ENCODE measurements at regions of chr3 and their contacts with region 1.

Region 1: DNA sequence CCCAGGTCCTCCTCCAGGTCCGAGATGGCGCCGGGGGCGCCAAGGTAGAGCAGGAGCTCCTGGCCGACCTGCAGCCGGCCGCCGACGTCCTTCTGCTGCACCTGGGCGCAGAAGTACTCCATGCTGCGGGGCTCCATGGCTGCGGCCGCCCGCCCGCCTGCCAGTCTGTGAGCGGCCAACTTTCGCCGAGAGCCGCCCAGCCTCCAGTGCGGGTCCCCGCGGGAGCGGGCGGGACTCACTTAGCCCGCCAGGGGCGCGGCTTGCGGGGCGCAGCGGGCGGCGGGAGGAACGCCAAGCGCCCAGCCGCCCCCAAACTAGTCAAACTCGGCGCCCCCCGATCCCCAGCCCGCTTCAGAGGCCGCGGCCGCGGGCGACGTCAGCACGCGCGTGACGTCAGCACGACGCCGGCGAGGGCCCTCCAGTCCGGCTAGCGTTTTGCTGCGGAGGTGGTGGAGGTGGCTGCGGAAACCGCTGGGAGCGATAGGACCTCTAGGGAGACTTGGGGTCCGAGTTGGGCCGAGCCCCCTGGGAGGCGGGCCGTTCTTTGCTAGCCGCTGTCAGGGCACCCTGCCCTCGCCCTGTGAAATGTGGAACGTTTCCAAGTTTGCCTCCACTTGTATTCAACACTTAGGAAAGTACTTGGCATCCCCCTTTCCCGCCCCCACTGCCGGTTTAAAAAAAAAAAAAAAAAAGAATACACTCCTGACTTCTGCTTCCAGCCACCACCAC is at the start of gene CLASP2:
- DNase-seq: peak; percentile 66 to 93 (median 78)
- ATAC-seq: peak; percentile 75
- H3K4me3 ChIP-seq: peak within 1 kb of the TSS; percentile 92
- H3K4me3 Mint-ChIP-seq: peak within 1 kb of the TSS; percentile 99
- H3K27ac ChIP-seq: peak within 1 kb of the TSS; percentile 84 to 88
- H3K27ac Mint-ChIP-seq: no peak within 1 kb of the TSS
- H3K4me1 ChIP-seq: peaks cover 14% of the 10 kb centered on the region
- H3K4me1 Mint-ChIP-seq: peaks cover 5% of the 10 kb centered on the region
- H3K27me3 ChIP-seq: peaks cover 0 to 2% of the 10 kb centered on the region in 2 experiments
- H3K27me3 Mint-ChIP-seq: no peaks in the 10 kb centered on the region
- CTCF ChIP-seq: no peak
- total RNA-seq, gene CLASP2: 63.4 to 73.1 TPM

Region 2: GRCh38 chr3:33131331-33132018 is 586.6 kb before region 1 on chr3:
- CTCF ChIA-PET with region 1: no interaction called
- POLR2A ChIA-PET with region 1: no interaction called
- intact Hi-C with region 1: loop called (anchors 1 to 2 kb)
- DNase-seq: peak in 9 of 14 experiments; percentile 5 to 67 (median 18)
- ATAC-seq: peak; percentile 67
- H3K4me3 ChIP-seq: no peak overlapping the region
- H3K4me3 Mint-ChIP-seq: no peak overlapping the region
- H3K27ac ChIP-seq: no peak overlapping the region
- H3K27ac Mint-ChIP-seq: no peak overlapping the region
- H3K4me1 ChIP-seq: no peaks in the 10 kb centered on the region
- H3K4me1 Mint-ChIP-seq: peaks cover 6% of the 10 kb centered on the region
- H3K27me3 ChIP-seq: no peaks in the 10 kb centered on the region
- H3K27me3 Mint-ChIP-seq: no peaks in the 10 kb centered on the region
- CTCF ChIP-seq: peak; percentile 90

Region 3: DNA sequence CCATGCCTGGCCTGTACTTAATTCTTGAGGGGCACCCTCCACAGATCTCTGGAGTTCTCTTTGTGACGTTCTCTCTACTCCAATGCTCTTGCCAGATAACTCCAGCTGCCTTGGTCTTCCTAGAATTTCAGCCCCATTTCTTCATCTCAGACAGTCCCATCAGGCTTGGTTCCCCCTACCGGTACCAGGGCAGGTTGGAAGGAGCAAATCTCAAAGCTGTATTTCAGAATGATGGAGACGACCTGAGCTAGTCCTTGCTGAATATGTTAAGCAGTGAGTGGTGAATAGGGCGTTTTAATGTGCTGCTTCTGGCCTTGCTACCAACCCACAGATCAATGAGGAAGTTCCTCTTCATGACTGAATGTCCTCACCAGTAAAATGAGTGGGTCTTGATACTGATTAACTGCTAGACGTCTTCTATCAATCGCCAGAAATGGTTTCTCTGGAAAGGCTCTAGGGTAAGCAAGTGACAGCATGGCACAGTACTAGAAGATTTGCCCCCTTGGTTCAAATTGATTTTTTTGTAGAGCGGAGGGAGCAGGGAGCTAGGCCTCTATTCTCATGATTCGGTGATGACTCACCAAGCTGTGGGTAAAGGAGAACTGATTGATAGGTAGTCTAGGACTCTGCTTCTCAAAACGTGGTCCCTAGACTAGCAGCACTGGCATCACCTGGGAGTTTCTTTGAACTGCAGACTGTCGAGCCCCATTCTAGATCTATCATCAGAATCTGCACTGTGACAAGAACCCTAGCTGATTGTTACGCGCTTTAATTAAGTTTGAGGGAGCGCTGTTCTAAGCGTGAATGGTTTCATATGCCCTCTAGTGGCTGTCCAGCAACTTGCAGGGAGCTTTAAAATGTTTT is 345.6 kb before region 1 on chr3:
- CTCF ChIA-PET with region 1: interaction called, 3 read pairs
- POLR2A ChIA-PET with region 1: no interaction called
- intact Hi-C with region 1: loop called in 1 of 2 experiments (anchors 10 kb)
- DNase-seq: peak; percentile 6 to 67 (median 28)
- ATAC-seq: peak; percentile 75
- H3K4me3 ChIP-seq: no peak overlapping the region
- H3K4me3 Mint-ChIP-seq: no peak overlapping the region
- H3K27ac ChIP-seq: no peak overlapping the region
- H3K27ac Mint-ChIP-seq: no peak overlapping the region
- H3K4me1 ChIP-seq: peaks cover 5% of the 10 kb centered on the region
- H3K4me1 Mint-ChIP-seq: peaks cover 5% of the 10 kb centered on the region
- H3K27me3 ChIP-seq: no peaks in the 10 kb centered on the region
- H3K27me3 Mint-ChIP-seq: peaks cover 16% of the 10 kb centered on the region
- CTCF ChIP-seq: peak; percentile 91

Region 4: GRCh38 chr3:33636125-33636850 is 81.7 kb before region 1 on chr3:
- CTCF ChIA-PET with region 1: interaction called, 3 read pairs
- POLR2A ChIA-PET with region 1: no interaction called
- intact Hi-C with region 1: loop called (anchors 1 to 5 kb)
- DNase-seq: peak in 3 of 14 experiments; percentile 34 to 64 (median 57)
- ATAC-seq: peak; percentile 60
- H3K4me3 ChIP-seq: no peak overlapping the region
- H3K4me3 Mint-ChIP-seq: no peak overlapping the region
- H3K27ac ChIP-seq: no peak overlapping the region
- H3K27ac Mint-ChIP-seq: no peak overlapping the region
- H3K4me1 ChIP-seq: no peaks in the 10 kb centered on the region
- H3K4me1 Mint-ChIP-seq: no peaks in the 10 kb centered on the region
- H3K27me3 ChIP-seq: no peaks in the 10 kb centered on the region
- H3K27me3 Mint-ChIP-seq: no peaks in the 10 kb centered on the region
- CTCF ChIP-seq: peak; percentile 56

Region 5: DNA sequence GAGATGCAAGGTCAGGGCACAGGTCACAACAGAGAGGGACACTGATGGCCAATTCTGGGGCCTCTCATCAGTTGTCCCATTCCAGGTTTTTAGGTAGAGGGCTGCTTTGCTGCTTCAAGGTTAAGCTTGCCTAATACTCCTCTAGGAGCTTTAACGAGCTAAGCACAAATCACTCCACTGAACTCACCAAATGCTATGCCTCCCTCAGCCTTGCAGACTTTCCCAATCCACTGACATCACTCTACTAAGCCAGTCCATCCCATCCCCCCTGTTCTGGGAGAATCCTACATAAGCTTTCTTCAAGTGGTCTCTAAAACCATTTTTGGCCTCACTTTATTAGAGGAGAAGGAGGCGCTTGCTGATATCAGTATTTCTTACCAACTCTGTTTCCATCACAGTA is 55.6 kb after region 1 on chr3:
- CTCF ChIA-PET with region 1: no interaction called
- POLR2A ChIA-PET with region 1: no interaction called
- intact Hi-C with region 1: no loop called
- DNase-seq: no peak
- ATAC-seq: no peak
- H3K4me3 ChIP-seq: no peak overlapping the region
- H3K4me3 Mint-ChIP-seq: no peak overlapping the region
- H3K27ac ChIP-seq: no peak overlapping the region
- H3K27ac Mint-ChIP-seq: no peak overlapping the region
- H3K4me1 ChIP-seq: no peaks in the 10 kb centered on the region
- H3K4me1 Mint-ChIP-seq: no peaks in the 10 kb centered on the region
- H3K27me3 ChIP-seq: no peaks in the 10 kb centered on the region
- H3K27me3 Mint-ChIP-seq: no peaks in the 10 kb centered on the region
- CTCF ChIP-seq: no peak

Region 6: DNA sequence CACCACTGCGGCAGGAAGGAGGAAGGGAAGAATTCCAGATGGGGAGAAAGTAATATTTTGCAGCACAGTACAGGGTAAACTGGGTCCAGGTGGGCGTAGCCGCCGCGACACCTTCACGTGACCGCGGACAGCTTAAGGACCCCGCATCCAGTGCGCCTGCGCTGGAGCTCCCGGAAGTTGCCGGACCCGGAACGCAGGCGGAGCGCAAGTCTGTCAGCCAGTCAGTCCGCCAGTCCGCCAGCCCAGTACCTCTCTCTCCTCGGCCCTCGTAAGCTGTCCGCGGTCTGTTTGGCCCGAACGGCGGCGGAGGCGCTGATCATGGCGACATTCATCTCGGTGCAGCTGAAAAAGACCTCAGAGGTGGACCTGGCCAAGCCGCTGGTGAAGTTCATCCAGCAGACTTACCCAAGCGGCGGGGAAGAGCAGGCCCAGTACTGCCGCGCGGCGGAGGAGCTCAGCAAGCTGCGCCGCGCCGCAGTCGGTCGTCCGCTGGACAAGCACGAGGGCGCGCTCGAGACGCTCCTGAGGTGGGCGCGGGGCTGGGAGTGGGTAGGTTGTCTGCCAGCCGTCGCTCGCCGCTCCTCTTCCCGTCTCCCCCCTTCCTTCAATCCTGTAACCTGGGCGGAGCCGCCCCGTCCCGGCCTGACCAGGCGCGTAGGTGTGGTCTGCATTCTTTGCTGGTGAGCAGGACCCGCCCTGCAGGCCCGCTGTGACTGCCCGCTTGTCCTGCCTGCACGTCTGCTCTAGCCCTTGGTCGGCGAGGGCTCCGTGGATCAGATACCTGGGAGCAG is 80.6 kb after region 1 on chr3 and contains the start of gene PDCD6IP:
- CTCF ChIA-PET with region 1: interaction called, 4 read pairs
- POLR2A ChIA-PET with region 1: interaction called, 11 read pairs
- intact Hi-C with region 1: loop called in 1 of 2 experiments (anchors 2 kb)
- DNase-seq: peak; percentile 76 to 94 (median 84)
- ATAC-seq: peak; percentile 75
- H3K4me3 ChIP-seq: peak within 1 kb of the TSS; percentile 82
- H3K4me3 Mint-ChIP-seq: peak within 1 kb of the TSS; percentile 99
- H3K27ac ChIP-seq: peak within 1 kb of the TSS; percentile 71 to 75
- H3K27ac Mint-ChIP-seq: peak within 1 kb of the TSS; percentile 93
- H3K4me1 ChIP-seq: peaks cover 26% of the 10 kb centered on the region
- H3K4me1 Mint-ChIP-seq: peaks cover 64% of the 10 kb centered on the region
- H3K27me3 ChIP-seq: no peaks in the 10 kb centered on the region
- H3K27me3 Mint-ChIP-seq: no peaks in the 10 kb centered on the region
- CTCF ChIP-seq: peak; percentile 23
- total RNA-seq, gene PDCD6IP: 109 to 112 TPM

Measured in CD4-positive, alpha-beta T cell (primary cell).